Vagina (tissue), 2 donors: ENCODE measurements at regions of chr5 and their contacts with region 1.

Region 1: GRCh38 chr5:118863345-118863744 is 125.0 kb downstream of the DTWD2 start:
- DNase-seq: no peak
- H3K4me3 ChIP-seq: no peak overlapping the region
- H3K27ac ChIP-seq: no peak overlapping the region
- H3K4me1 ChIP-seq: no peaks in the 10 kb centered on the region
- H3K27me3 ChIP-seq: no peaks in the 10 kb centered on the region
- CTCF ChIP-seq: no peak
- POLR2A ChIP-seq: no peak

Region 2: GRCh38 chr5:118789358-118789757 is 74.0 kb before region 1 on chr5:
- intact Hi-C with region 1: no loop called
- DNase-seq: no peak
- H3K4me3 ChIP-seq: no peak overlapping the region
- H3K27ac ChIP-seq: no peak overlapping the region
- H3K4me1 ChIP-seq: peaks cover 13% of the 10 kb centered on the region
- H3K27me3 ChIP-seq: no peaks in the 10 kb centered on the region
- CTCF ChIP-seq: no peak
- POLR2A ChIP-seq: no peak

Region 3: GRCh38 chr5:118818604-118819003 is 44.7 kb before region 1 on chr5:
- intact Hi-C with region 1: loop called (anchors 2 kb)
- DNase-seq: no peak
- H3K4me3 ChIP-seq: no peak overlapping the region
- H3K27ac ChIP-seq: no peak overlapping the region
- H3K4me1 ChIP-seq: no peaks in the 10 kb centered on the region
- H3K27me3 ChIP-seq: no peaks in the 10 kb centered on the region
- CTCF ChIP-seq: no peak
- POLR2A ChIP-seq: no peak